Common myeloid progenitor, CD34-positive (primary cell): ENCODE measurements at regions of chr7 and their contacts with region 1.

Region 1: GRCh38 chr7:5557920-5558401 is 134.3 kb upstream of the TNRC18 start:
- DNase-seq: peak in 1 of 3 donors; percentile 23
- H3K4me3 ChIP-seq: peak overlapping the region in 6 of 7 experiments; percentile 35 to 67 (median 50)
- H3K27ac ChIP-seq: peak overlapping the region in 1 of 2 experiments; percentile 82
- H3K4me1 ChIP-seq: peaks cover 9 to 57% (median 52%) of the 10 kb centered on the region in 4 experiments
- H3K27me3 ChIP-seq: peaks cover 0 to 4% (median 0%) of the 10 kb centered on the region in 5 experiments

Region 2: GRCh38 chr7:5445981-5446594 is 111.9 kb before region 1 on chr7:
- CTCF ChIA-PET with region 1: no interaction called
- POLR2A ChIA-PET with region 1: no interaction called
- DNase-seq: no peak
- H3K4me3 ChIP-seq: no peak overlapping the region
- H3K27ac ChIP-seq: no peak overlapping the region
- H3K4me1 ChIP-seq: peaks cover 0 to 37% (median 33%) of the 10 kb centered on the region in 4 experiments
- H3K27me3 ChIP-seq: no peaks in the 10 kb centered on the region

Region 3: DNA sequence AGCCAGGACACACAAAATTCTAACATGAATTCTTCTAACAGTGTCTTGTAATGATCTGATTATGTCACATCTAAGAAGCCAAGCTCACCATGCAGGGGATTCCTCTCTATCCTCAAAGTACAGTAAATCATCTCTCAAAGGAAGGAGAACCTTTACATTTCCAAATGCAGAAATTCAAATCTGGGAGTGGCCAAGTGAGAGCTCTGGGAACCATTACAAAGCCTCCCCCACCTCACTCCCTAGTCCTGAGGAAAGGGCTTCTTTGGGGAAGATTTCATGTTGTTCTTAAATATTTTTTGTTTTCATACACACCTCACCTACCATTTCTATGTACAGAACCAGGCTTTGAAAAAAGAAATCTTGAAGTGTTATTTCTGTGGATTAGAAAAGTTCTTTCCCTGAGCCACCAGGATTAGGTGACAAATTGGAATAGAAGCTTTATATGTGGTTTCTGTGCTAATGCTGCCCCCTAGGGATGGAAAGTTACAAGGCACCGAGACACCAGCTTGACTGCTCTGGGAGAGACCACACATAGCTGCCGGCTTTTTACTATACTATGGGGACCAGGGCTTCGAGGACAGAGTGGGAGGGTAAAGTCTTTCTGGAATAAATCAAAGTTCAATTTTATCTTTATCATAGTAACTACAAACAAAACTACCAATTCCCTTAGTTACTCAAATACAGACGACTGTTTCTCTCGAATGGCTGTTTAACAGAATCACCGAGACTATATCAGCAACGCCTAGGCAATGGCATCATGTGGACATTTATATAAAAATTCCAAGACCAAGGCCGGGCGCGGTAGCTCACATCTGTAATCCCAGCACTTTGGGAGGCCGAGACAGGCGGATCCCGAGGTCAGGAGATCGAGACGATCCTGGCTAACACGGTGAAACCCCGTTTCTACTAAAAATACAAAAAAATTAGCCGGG is 107.4 kb after region 1 on chr7:
- CTCF ChIA-PET with region 1: no interaction called
- POLR2A ChIA-PET with region 1: no interaction called
- DNase-seq: peak; percentile 81 to 91 (median 84)
- H3K4me3 ChIP-seq: no peak overlapping the region
- H3K27ac ChIP-seq: no peak overlapping the region
- H3K4me1 ChIP-seq: peaks cover 3 to 39% (median 26%) of the 10 kb centered on the region in 4 experiments
- H3K27me3 ChIP-seq: no peaks in the 10 kb centered on the region

Region 4: GRCh38 chr7:5694912-5695726 is 137.2 kb after region 1 on chr7:
- CTCF ChIA-PET with region 1: interaction called, 13 read pairs
- POLR2A ChIA-PET with region 1: no interaction called
- DNase-seq: peak; percentile 28 to 82 (median 78)
- H3K4me3 ChIP-seq: peak overlapping the region in 4 of 7 experiments; percentile 0 to 47 (median 20)
- H3K27ac ChIP-seq: peak overlapping the region in 1 of 2 experiments; percentile 8
- H3K4me1 ChIP-seq: peaks cover 40 to 63% (median 52%) of the 10 kb centered on the region in 4 experiments
- H3K27me3 ChIP-seq: no peaks in the 10 kb centered on the region